Right ventricle myocardium inferior (tissue), 1 donor: ENCODE measurements at regions of chr16 and their contacts with region 1.

Region 1: GRCh38 chr16:21083729-21084268 is 66.8 kb downstream of the DNAH3 start:
- DNase-seq: peak; percentile 72
- ATAC-seq: peak; percentile 93

Region 2: DNA sequence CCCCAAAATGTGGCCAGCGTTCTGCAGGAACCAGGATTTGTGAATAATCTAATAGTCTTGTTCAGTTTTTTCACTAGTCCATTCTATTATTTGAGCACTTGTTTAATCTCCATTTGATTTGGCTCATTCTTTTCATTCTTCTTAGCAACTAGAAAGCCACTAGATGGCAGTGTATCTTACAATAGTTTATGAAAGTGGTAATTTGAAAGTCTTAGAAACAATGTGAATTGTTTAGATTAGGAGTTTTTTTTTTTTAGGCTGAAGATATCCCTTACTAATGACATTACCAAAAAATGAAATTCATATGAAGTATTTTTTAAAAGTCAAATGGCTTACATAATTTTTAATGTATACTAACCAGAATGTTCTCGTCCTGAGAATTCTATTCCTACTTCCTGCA is 284.2 kb before region 1 on chr16:
- intact Hi-C with region 1: loop called (anchors 2 kb)
- DNase-seq: no peak
- ATAC-seq: no peak

Region 3: GRCh38 chr16:21005008-21005407 is 78.8 kb before region 1 on chr16:
- intact Hi-C with region 1: no loop called
- DNase-seq: no peak
- ATAC-seq: no peak

Region 4: GRCh38 chr16:21037736-21038135 is 46.1 kb before region 1 on chr16:
- intact Hi-C with region 1: no loop called
- DNase-seq: no peak
- ATAC-seq: no peak